WTC11 (cell line): ENCODE measurements at regions of chr12 and their contacts with region 1.

Region 1: DNA sequence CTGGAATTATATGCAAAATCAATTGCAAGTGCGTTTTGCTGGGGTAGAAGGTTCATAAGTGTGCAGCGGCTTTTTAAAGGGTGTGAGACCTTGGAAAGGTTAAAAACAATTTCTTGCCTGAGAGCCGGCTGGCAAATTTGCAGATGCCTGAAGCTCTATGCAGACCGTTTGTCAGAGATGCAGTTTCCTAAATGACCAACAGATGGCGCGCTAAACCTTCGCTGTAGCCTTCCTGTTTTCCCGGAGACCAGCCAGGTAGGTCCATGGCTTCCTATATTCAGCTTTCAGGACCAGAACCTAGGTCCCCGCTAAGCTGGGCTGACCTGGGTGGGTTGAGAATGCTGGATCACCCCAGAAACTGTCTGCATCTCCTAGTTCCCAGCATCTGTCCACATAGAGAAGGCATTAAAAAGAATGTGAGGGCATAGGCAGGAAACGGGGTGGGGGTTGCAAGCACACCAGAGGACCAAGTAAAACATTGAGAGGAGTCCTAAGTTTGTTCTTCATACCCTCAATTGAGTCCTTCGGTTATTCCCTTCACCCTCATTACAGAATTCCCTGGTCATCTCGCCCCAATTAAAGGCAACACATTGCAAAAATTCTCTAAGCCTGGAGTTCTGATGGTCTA is 5.7 kb upstream of the NOS1 start:
- DNase-seq: peak; percentile 91
- ATAC-seq: peak; percentile 86
- H3K4me3 Mint-ChIP-seq: no peak overlapping the region
- H3K27ac Mint-ChIP-seq: no peak overlapping the region
- H3K4me1 Mint-ChIP-seq: peaks cover 10% of the 10 kb centered on the region
- H3K27me3 Mint-ChIP-seq: peaks cover 34% of the 10 kb centered on the region
- CTCF ChIP-seq: peak; percentile 96

Region 2: GRCh38 chr12:117212563-117213190 is 154.4 kb before region 1 on chr12:
- CTCF ChIA-PET with region 1: interaction called, 22 read pairs
- POLR2A ChIA-PET with region 1: no interaction called
- DNase-seq: peak; percentile 80
- ATAC-seq: peak; percentile 84
- H3K4me3 Mint-ChIP-seq: no peak overlapping the region
- H3K27ac Mint-ChIP-seq: 0 out of 2 replicates have a peak overlapping the region, but pooled peaks have one; percentile 11
- H3K4me1 Mint-ChIP-seq: peaks cover 13% of the 10 kb centered on the region
- H3K27me3 Mint-ChIP-seq: no peaks in the 10 kb centered on the region; the same call in 1 of the 2 replicates
- CTCF ChIP-seq: peak; percentile 70

Region 3: DNA sequence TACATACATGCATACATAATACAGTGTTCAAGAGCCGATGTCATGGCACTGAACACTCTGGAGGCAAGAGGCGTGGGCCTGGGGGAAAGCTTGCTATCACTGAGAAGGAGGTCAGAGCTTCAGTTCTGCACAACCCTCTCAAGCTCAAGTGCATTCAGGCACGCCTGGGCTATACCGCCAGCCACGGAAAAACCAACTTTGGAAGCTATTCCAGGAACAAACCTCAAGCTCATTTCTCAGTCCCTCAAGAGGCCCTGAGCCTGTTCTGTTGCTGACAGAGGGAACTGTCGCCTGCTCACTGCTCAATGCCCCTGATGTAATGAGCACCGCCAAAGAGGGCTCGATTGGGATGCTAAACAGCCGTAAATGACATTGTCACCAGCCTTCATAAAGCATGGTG is 14.9 kb before region 1 on chr12:
- CTCF ChIA-PET with region 1: interaction called, 11 read pairs
- POLR2A ChIA-PET with region 1: no interaction called
- DNase-seq: no peak
- ATAC-seq: no peak
- H3K4me3 Mint-ChIP-seq: no peak overlapping the region
- H3K27ac Mint-ChIP-seq: no peak overlapping the region
- H3K4me1 Mint-ChIP-seq: peaks cover 8% of the 10 kb centered on the region
- H3K27me3 Mint-ChIP-seq: peaks cover 3% of the 10 kb centered on the region
- CTCF ChIP-seq: no peak

Region 4: DNA sequence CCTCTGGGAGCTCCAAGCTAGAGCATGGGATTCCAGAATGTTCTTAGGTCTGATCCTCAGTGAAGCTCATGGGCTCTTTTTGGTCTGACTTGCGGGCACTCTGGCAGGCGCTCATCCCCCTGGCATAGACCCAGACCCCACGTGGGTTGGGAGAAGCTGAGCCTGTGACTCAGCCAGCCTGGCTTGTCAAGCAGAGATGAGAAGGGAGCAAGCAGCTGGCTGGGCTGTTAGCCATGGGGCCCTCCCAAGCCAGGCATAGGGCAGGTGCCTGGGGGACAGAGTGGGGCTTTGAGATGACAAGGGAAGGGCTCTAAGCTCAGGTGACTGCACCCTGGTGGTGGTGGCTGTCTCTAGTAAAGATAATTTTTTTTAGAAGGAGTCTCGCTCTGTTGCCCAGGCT is 74.6 kb after region 1 on chr12:
- CTCF ChIA-PET with region 1: interaction called, 38 read pairs
- POLR2A ChIA-PET with region 1: no interaction called
- DNase-seq: no peak
- ATAC-seq: peak; percentile 68; the same call in 1 of the 2 replicates
- H3K4me3 Mint-ChIP-seq: no peak overlapping the region
- H3K27ac Mint-ChIP-seq: no peak overlapping the region
- H3K4me1 Mint-ChIP-seq: no peaks in the 10 kb centered on the region
- H3K27me3 Mint-ChIP-seq: no peaks in the 10 kb centered on the region
- CTCF ChIP-seq: no peak

Region 5: DNA sequence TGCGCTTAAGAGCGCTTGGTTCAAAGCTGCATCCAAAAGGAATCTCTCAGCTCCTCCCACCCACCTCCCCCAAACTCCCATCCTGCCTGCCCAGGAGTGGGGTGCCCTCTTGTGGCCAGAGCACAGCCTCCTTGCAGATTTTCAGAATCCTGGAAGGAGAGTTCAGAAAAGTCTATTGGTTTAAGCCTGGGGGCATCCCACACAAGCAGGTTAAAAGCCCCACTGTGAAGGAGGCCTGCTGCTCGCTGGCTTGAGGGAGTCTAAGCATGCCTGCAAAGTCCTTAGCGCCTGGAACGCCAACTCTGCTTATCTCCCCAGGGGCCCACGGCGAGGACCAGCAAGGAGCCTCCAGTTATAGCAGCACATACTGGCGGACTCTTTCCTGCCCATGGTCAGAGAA is 304.6 kb after region 1 on chr12:
- CTCF ChIA-PET with region 1: interaction called, 33 read pairs
- POLR2A ChIA-PET with region 1: no interaction called
- DNase-seq: peak; percentile 91
- ATAC-seq: peak; percentile 92
- H3K4me3 Mint-ChIP-seq: no peak overlapping the region
- H3K27ac Mint-ChIP-seq: 0 out of 2 replicates have a peak overlapping the region, but pooled peaks have one; percentile 32
- H3K4me1 Mint-ChIP-seq: peaks cover 8% of the 10 kb centered on the region
- H3K27me3 Mint-ChIP-seq: no peaks in the 10 kb centered on the region; the same call in 1 of the 2 replicates
- CTCF ChIP-seq: peak; percentile 53

Region 6: DNA sequence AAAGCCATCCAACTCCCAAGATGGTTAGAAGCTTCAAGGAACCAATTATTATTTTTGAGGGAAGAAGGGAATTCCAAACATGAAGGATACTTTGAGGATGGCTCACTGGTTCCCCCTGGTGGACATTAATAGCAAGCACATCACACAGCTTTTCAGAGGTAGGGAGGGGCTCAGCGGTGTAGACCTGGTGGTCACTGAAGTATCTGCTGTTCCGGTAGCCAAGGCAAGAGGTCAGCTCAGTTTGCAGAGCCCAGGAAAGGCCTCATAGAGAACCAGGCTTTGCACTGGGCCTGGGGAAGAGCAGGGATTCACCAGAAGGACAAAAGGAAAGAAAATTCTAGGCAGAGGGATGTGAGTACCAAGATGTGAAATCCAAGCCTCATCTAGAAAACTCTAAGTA is 482.9 kb after region 1 on chr12:
- CTCF ChIA-PET with region 1: interaction called, 34 read pairs
- POLR2A ChIA-PET with region 1: no interaction called
- DNase-seq: peak; percentile 45
- ATAC-seq: peak; percentile 88
- H3K4me3 Mint-ChIP-seq: no peak overlapping the region
- H3K27ac Mint-ChIP-seq: no peak overlapping the region
- H3K4me1 Mint-ChIP-seq: peaks cover 28% of the 10 kb centered on the region
- H3K27me3 Mint-ChIP-seq: no peaks in the 10 kb centered on the region
- CTCF ChIP-seq: peak; percentile 92

Region 7: DNA sequence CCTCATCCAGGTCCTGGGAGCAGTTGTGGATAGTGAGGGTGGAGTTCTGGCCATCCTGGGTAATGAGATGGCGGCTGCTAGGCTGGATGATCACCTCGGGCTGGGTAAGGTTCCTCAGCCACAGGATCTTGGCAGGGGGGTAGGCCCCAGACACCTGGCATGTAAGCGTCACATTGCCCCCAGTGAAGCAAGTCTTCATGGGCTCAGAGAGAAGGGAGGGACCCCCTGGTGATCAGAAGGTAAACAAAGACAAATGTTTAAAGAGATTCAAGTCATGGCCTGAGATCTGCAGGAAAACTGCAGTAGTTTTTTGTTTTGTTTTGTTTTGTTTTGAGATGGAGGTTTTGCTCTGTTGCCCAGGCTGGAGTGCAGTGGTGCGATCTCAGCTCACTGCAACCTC is 706.6 kb after region 1 on chr12:
- CTCF ChIA-PET with region 1: no interaction called
- POLR2A ChIA-PET with region 1: no interaction called
- DNase-seq: no peak
- ATAC-seq: no peak
- H3K4me3 Mint-ChIP-seq: no peak overlapping the region
- H3K27ac Mint-ChIP-seq: peak overlapping the region; percentile 74
- H3K4me1 Mint-ChIP-seq: peaks cover 2% of the 10 kb centered on the region; the same call in 1 of the 2 replicates
- H3K27me3 Mint-ChIP-seq: no peaks in the 10 kb centered on the region
- CTCF ChIP-seq: no peak